ENCODE measurements at regions of chr12 and their contacts with region 1.

Region 1: GRCh38 chr12:54958048-54958658 is 26.4 kb downstream of the TESPA1 start:
- DNase-seq: peak; percentile 40 to 62 (median 48)
- ATAC-seq: no peak
- H3K4me3 ChIP-seq: no peak overlapping the region
- H3K27ac ChIP-seq: no peak overlapping the region
- H3K4me1 ChIP-seq: no peaks in the 10 kb centered on the region
- H3K27me3 ChIP-seq: no peaks in the 10 kb centered on the region
- CTCF ChIP-seq: peak; percentile 34 to 85 (median 70)
- POLR2A ChIP-seq: no peak

Region 2: DNA sequence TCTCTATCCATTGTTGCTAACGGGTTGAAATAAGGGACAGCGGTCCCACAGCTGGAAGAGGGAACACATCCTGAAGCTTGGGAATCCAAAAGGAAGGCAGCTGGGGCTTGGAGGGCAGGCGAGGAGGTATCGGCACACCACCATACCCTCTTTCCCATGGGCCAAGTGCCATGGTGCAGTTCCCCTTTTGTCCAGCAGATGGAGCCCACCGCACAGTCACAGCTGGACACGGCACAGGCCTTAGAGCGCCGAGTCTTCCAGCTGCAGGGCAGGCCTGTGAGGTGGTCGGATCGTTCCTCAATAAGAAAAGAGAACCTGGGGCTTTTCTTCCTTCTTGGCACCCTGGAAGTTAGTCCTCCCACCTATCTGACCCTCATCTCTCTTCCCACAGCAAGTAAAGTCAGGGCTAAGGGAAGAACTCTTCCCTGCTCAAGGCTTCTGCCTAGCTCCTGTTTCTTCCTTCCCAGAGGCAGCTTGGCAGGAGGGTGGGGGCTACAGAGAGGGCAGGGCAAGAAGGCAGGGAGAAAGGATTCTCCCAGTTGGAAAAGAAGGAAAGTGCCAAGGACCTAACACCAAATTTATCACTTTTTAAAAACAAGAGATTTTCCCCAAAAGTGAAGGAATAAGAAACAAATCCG is 378.3 kb before region 1 on chr12:
- intact Hi-C with region 1: loop called (anchors 10 kb)
- DNase-seq: peak; percentile 84 to 89 (median 86)
- ATAC-seq: peak; percentile 96
- H3K4me3 ChIP-seq: no peak overlapping the region
- H3K27ac ChIP-seq: no peak overlapping the region
- H3K4me1 ChIP-seq: peaks cover 7% of the 10 kb centered on the region
- H3K27me3 ChIP-seq: no peaks in the 10 kb centered on the region
- CTCF ChIP-seq: peak; percentile 95 to 100 (median 98)
- POLR2A ChIP-seq: no peak

Region 3: DNA sequence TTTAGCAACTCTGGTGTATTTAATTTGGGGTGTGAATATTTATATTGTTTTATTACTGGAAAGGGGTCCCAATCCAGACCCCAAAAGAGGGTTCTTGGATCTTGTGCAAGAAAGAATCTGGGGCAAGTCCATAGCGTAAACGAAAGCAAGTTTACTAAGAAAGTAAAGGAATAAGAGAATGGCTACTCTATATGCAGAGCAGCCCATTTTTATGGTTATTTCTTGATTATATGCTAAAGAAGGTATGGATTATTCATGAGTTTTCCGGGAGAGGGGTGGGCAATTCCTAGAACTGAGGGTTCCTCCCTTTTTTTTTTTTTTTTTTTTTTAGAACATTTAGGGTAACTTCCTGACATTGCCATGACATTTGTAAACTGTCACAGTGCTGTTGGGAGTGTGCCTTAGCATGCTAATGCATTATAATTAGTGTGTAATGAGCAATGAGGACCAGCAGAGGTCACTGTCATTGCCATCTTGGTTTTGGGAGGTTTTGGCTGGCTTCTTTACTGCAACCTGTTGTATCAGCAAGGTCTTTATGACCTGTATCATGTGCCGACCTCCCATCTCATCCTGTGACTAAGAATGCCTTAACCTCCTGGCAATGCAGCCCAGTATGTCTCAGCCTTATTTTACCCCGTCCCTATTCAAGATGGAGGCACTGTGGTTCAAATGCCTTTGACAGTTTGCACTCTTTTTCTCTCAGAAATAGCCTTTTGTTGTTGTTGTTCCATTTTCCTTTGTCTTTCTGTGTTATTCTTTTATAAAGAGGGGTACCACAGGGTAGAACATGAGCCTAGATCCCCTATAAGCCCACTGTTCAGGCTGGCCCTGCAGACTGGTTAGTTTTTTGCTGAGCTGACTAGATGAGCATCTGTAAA is 234.5 kb before region 1 on chr12:
- intact Hi-C with region 1: loop called (anchors 10 kb)
- DNase-seq: no peak
- ATAC-seq: no peak
- H3K4me3 ChIP-seq: no peak overlapping the region
- H3K27ac ChIP-seq: no peak overlapping the region
- H3K4me1 ChIP-seq: no peaks in the 10 kb centered on the region
- H3K27me3 ChIP-seq: peaks cover 0 to 3% of the 10 kb centered on the region in 2 donors
- CTCF ChIP-seq: peak in 6 of 7 experiments; percentile 35 to 46 (median 40)
- POLR2A ChIP-seq: no peak

Region 4: GRCh38 chr12:54759751-54760150 is 198.4 kb before region 1 on chr12:
- intact Hi-C with region 1: loop called (anchors 10 kb)
- DNase-seq: peak in 1 of 4 donors; percentile 21
- ATAC-seq: no peak
- H3K4me3 ChIP-seq: no peak overlapping the region
- H3K27ac ChIP-seq: no peak overlapping the region
- H3K4me1 ChIP-seq: no peaks in the 10 kb centered on the region
- H3K27me3 ChIP-seq: no peaks in the 10 kb centered on the region
- CTCF ChIP-seq: peak in 1 of 7 experiments; percentile 9
- POLR2A ChIP-seq: no peak

Region 5: DNA sequence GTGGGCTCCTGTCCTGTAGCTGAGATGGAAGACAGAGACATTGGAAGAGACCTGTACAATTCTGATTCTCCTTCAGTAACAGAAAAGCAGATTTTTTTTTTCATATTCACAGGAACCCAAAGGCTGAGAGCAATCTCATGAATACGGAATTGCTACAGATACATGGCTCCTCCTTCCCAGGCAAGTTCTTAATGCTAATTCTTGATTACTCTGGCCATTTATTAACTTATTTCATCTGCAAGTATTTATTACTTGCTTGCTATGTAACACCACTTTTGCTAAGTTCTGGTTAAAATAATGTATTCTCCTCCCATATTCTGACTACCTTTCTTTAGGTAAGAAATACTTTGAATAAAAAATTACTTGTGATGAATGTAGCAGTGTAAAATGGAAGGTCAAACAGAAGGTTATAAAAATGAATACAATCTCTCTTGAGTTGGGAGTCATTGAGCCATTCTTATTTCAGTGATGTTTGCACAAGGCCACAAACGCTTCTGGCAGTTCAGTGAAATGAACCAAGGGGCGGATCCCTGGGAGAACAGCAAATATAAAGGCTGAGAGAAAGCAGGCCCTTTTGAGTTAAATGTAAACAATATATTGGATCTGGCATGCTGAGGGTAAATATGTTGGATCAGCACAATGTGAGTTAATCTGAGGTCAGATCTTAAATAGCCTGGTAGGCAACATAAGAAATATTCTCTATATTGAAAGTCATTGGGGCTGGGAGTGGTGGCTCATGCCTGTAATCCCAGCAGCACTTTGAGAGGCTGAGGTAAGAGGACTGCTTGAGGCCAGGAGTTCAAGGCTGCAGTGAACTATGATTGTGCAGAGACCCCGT is 66.2 kb before region 1 on chr12:
- intact Hi-C with region 1: no loop called
- DNase-seq: peak in 2 of 4 donors; percentile 12 to 25
- ATAC-seq: no peak
- H3K4me3 ChIP-seq: no peak overlapping the region
- H3K27ac ChIP-seq: no peak overlapping the region
- H3K4me1 ChIP-seq: no peaks in the 10 kb centered on the region
- H3K27me3 ChIP-seq: no peaks in the 10 kb centered on the region
- CTCF ChIP-seq: no peak
- POLR2A ChIP-seq: no peak

Region 6: GRCh38 chr12:54998958-54999510 is 40.9 kb after region 1 on chr12:
- intact Hi-C with region 1: no loop called
- DNase-seq: no peak
- ATAC-seq: no peak
- H3K4me3 ChIP-seq: no peak overlapping the region
- H3K27ac ChIP-seq: no peak overlapping the region
- H3K4me1 ChIP-seq: no peaks in the 10 kb centered on the region
- H3K27me3 ChIP-seq: no peaks in the 10 kb centered on the region
- CTCF ChIP-seq: no peak
- POLR2A ChIP-seq: no peak

Measured in body of pancreas (tissue), 4 donors.